Mammary epithelial cell (primary cell): ENCODE measurements at regions of chr19 and their contacts with region 1.

Region 1: GRCh38 chr19:2132731-2133490 is 18.5 kb downstream of the AP3D1 start:
- DNase-seq: no peak
- H3K4me3 ChIP-seq: no peak overlapping the region
- H3K27ac ChIP-seq: no peak overlapping the region
- H3K4me1 ChIP-seq: no peaks in the 10 kb centered on the region
- H3K27me3 ChIP-seq: no peaks in the 10 kb centered on the region
- CTCF ChIP-seq: no peak

Region 2: DNA sequence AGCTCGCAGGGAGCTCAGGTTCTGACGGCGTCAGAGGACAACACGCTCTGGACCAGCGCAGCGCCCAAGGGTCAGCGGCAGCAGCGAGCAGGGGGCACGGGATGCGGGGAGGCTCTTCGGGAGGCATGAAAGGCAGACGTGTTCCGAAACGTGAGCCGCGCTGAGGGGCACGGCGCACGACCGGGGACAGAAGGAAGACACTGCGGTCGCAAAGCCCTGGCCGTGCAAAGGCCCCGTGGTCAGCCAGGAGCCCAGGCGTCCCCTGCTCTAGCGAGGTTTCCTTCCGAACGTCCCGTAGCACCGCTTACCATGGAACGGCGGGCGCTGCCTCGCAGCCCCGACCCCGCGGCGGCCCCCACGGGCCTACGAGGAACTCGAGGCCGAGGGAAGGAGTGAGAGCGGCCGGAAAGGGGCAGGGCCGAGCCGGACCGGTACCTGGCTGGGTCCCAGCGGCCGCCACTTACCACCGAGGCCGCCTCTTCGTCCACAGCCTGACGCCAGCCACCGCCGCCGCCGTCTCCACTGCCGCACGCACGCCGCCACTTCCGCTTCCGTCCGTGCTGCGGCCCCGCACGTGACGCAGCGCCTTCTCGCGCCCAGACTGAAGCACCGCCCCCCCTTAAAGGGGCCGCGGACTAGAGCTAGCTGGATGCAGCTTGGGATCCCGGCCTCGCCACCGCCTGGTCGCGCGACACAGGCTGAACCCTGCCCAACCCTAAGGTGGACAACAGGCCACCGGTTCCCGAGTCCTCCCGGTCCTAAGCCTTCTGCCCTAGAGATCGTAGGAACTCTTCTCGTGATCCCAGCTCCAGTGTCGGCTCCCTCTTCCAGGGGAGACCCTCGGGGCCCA is 257.0 kb before region 1 on chr19:
- CTCF ChIA-PET with region 1: no interaction called
- dilution Hi-C with region 1: loop called (anchors 5 kb)
- in situ Hi-C with region 1: no loop called
- intact Hi-C with region 1: no loop called
- DNase-seq: peak; percentile 86
- H3K4me3 ChIP-seq: peak overlapping the region; percentile 76 to 100 (median 88)
- H3K27ac ChIP-seq: peak overlapping the region; percentile 73
- H3K4me1 ChIP-seq: peaks cover 28% of the 10 kb centered on the region
- H3K27me3 ChIP-seq: no peaks in the 10 kb centered on the region
- CTCF ChIP-seq: no peak

Region 3: DNA sequence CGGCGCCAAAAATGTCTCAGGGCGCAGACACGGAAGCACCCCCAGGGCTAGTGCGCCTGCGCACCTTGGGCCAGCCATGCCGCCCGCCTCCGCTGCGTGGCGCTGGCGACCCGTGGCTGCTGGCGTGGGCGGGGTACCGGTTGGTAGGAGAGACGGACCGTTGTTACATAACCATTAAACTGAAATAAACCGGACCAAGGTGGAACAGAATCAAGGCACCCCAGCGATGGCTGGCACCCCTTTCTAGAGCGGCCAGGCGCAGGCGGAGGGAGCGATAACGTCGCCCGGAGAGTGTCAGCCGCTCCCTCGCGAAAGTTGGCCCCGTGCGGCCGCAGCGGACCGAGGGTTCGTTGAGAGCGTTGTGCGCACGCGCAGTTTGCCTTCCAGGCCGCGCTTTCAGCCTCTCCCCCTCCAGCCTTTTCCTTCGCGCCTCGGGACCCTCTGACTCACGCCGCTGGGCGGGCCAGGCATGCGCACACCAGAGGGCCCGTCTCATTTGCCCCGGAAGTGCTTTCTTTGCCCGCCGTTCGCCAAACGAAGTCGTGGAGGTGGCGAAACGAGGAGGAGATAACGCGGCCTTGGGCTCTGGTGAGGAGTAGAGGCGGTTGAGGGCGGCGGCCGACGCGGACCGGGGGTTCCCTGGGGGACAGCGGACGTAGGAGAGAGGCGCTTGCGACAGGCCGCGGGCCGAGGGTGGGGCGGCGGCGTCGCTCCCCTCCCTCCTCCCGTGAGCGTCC is 103.6 kb after region 1 on chr19 and contains the starts of genes PLEKHJ1 and SF3A2:
- CTCF ChIA-PET with region 1: no interaction called
- dilution Hi-C with region 1: no loop called
- in situ Hi-C with region 1: no loop called
- intact Hi-C with region 1: no loop called
- DNase-seq: peak; percentile 97
- H3K4me3 ChIP-seq: peak within 1 kb of the TSS; percentile 67 to 90 (median 84)
- H3K27ac ChIP-seq: peak within 1 kb of the TSS; percentile 79
- H3K4me1 ChIP-seq: peaks cover 38% of the 10 kb centered on the region
- H3K27me3 ChIP-seq: no peaks in the 10 kb centered on the region
- CTCF ChIP-seq: peak; percentile 93 to 100
- total RNA-seq, gene PLEKHJ1: 33.0 to 61.5 TPM
- total RNA-seq, gene SF3A2: 21.0 to 68.9 TPM